Natural killer cell (primary cell): ENCODE measurements at regions of chr10 and their contacts with region 1.

Region 1: DNA sequence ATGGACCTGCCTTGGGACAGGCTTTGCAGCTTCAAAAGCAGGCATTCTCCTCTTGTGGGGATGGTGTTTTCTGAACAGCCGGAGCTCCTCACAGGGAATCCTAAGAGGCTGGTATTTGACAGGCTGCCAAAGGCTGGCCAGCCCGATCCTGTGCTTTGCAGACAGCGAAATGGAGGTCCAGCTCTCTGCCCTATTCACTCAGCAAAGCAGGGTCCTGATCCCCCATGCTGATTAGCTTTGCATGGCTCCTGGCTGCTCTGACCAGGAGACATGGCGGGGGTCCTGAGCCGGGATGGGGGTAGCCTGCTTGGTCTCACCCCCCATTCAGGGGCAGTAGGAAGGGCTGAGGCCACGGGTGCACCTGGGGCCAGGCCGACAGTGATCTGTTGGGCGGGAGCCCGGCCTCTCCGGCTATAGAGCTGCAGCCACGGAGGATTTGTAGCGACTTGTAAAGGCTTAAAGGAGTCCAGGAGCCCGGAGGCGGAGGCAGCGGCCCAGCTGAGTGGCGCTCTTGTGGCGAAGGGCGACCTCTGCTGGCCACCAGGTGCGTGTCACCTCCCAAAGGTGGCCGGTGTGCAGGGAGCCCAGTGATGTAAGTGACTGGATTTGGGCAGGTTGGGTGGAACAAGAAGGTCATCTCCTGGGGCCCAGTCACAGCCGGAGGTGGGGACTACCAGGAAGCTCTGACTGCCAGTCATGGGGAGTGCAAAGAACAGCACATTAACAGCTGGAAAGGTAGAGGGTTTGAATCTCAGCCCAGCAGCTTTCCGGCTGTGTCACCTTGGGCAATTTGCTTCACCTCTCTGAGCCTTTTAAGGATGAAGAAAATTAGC is 126.5 kb downstream of the ZMIZ1 start:
- DNase-seq: peak; percentile 74 to 88
- ATAC-seq: peak; percentile 85 to 97 (median 91)
- H3K4me3 ChIP-seq: no peak overlapping the region
- H3K4me3 Mint-ChIP-seq: no peak overlapping the region
- H3K27ac ChIP-seq: no peak overlapping the region
- H3K27ac Mint-ChIP-seq: peak overlapping the region; percentile 45 to 53
- H3K4me1 ChIP-seq: peaks cover 12% of the 10 kb centered on the region
- H3K4me1 Mint-ChIP-seq: peaks cover 12 to 17% of the 10 kb centered on the region in 2 donors
- H3K27me3 ChIP-seq: no peaks in the 10 kb centered on the region
- H3K27me3 Mint-ChIP-seq: no peaks in the 10 kb centered on the region
- CTCF ChIP-seq: peak; percentile 96

Region 2: DNA sequence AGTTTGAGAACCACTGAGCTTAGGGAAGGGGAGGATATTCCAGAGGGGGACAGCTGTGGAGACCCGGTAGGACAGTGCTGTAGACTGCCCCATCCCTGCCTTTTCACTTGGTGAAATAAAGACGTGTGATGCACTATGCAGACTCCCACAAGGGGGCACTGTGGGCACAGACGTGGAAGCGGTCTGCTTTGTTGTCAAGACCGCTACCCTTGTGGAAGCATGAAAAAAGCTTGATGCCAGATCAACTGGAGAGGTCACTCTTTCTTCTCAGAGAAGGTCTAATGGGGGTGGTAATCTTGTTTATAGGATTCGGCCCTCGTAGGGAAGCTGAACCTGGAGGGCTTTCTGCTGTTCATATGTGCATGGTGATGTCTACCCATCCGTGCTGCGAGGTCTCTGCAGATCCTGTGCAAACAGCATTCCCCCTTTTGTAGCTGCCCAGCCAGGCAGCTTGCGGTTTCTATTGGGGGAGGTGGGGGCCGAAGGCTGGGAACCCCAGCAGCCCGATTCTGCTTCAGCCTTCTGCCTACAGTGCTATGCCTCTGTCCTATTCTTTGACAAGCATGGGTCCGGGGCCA is 1147.9 kb before region 1 on chr10:
- intact Hi-C with region 1: loop called (anchors 1 kb)
- DNase-seq: peak; percentile 79 to 88
- ATAC-seq: peak; percentile 87 to 99 (median 96)
- H3K4me3 ChIP-seq: no peak overlapping the region
- H3K4me3 Mint-ChIP-seq: no peak overlapping the region
- H3K27ac ChIP-seq: no peak overlapping the region
- H3K27ac Mint-ChIP-seq: no peak overlapping the region
- H3K4me1 ChIP-seq: peaks cover 8% of the 10 kb centered on the region
- H3K4me1 Mint-ChIP-seq: peaks cover 12 to 19% of the 10 kb centered on the region in 2 donors
- H3K27me3 ChIP-seq: no peaks in the 10 kb centered on the region
- H3K27me3 Mint-ChIP-seq: no peaks in the 10 kb centered on the region
- CTCF ChIP-seq: peak; percentile 87

Region 3: GRCh38 chr10:78211561-78212051 is 983.7 kb before region 1 on chr10:
- intact Hi-C with region 1: loop called (anchors 5 kb)
- DNase-seq: peak in 1 of 2 donors; percentile 31
- ATAC-seq: no peak
- H3K4me3 ChIP-seq: no peak overlapping the region
- H3K4me3 Mint-ChIP-seq: no peak overlapping the region
- H3K27ac ChIP-seq: no peak overlapping the region
- H3K27ac Mint-ChIP-seq: no peak overlapping the region
- H3K4me1 ChIP-seq: no peaks in the 10 kb centered on the region
- H3K4me1 Mint-ChIP-seq: no peaks in the 10 kb centered on the region
- H3K27me3 ChIP-seq: no peaks in the 10 kb centered on the region
- H3K27me3 Mint-ChIP-seq: peaks cover 15 to 20% of the 10 kb centered on the region in 2 donors
- CTCF ChIP-seq: no peak

Region 4: DNA sequence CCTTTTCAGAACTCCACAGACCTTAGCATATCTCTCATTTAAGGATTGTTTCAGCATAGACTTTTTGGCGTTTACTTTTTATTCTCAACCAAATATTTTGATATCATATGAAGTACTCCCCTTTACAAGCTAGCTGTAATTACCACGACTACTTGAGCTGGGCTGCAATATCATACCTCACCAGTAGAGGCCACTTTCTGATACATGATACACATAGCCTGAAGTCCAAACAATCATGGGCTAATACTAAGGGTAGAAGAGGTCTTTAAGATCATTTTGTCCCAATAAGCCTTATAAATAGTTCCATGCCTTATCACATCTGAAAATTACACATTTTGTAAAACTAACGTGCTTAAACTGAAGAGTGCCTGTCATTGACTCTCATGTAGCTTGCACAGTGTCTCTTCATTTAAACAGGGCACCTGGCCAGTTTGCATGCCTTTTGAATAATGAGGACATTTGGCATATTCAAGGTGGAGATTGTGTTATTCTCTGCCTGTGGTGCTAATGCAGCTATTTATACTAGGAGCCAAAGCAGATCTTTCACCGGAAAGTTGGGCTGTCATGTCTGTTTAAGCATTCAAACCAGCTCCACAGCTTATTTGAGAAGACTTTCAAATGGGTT is 530.3 kb before region 1 on chr10:
- intact Hi-C with region 1: loop called (anchors 2 kb)
- DNase-seq: peak in 1 of 2 donors; percentile 19
- ATAC-seq: no peak
- H3K4me3 ChIP-seq: no peak overlapping the region
- H3K4me3 Mint-ChIP-seq: no peak overlapping the region
- H3K27ac ChIP-seq: no peak overlapping the region
- H3K27ac Mint-ChIP-seq: no peak overlapping the region
- H3K4me1 ChIP-seq: no peaks in the 10 kb centered on the region
- H3K4me1 Mint-ChIP-seq: no peaks in the 10 kb centered on the region
- H3K27me3 ChIP-seq: peaks cover 4% of the 10 kb centered on the region
- H3K27me3 Mint-ChIP-seq: peaks cover 38 to 63% of the 10 kb centered on the region in 2 donors
- CTCF ChIP-seq: peak; percentile 30

Region 5: DNA sequence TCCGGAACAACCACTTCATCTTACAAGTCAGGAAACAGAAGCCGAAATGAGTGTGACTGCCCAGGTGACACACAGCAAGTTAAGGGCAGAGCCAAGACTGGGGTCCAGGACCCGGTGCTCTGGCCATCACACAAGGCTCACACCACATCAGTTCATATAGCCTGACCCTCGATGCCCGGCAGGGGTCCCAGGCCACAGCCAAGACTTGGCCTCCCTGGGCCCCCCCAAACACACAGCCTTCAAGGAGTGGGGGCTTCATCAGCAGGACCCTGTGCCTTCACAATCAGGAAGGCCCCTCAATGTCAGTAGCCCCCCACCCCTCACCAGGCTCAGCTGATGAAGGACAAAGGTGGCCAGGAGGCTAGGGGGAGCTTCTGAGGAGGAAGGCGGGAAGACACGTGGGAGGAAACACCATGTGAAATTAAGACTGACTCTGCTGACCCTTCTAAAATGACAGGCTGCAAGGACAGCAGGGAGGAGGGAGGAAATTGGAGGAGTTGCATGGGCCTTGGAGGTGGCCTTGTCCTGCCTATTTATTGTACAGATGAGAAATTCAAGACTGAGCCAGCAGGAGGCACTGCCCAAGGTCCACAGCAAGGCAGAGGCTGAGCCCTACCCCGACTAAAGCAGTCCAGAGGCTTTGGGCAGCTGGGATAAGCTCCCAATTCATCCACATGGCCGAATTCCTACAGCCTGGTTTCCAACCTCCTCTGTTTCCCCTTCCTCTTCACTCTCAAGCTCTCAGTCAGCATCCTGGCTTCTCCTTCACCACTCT is 342.7 kb before region 1 on chr10:
- intact Hi-C with region 1: loop called (anchors 1 kb)
- DNase-seq: peak in 1 of 2 donors; percentile 52
- ATAC-seq: peak in 2 of 3 donors; percentile 49 to 52
- H3K4me3 ChIP-seq: no peak overlapping the region
- H3K4me3 Mint-ChIP-seq: no peak overlapping the region
- H3K27ac ChIP-seq: no peak overlapping the region
- H3K27ac Mint-ChIP-seq: no peak overlapping the region
- H3K4me1 ChIP-seq: no peaks in the 10 kb centered on the region
- H3K4me1 Mint-ChIP-seq: no peaks in the 10 kb centered on the region
- H3K27me3 ChIP-seq: no peaks in the 10 kb centered on the region
- H3K27me3 Mint-ChIP-seq: peaks cover 0 to 3% of the 10 kb centered on the region in 2 donors
- CTCF ChIP-seq: no peak